ENCODE measurements at regions of chr3 and their contacts with region 1.

Region 1: GRCh38 chr3:127672516-127673190 is at the start of gene ABTB1:
- DNase-seq: peak; percentile 82
- H3K4me3 ChIP-seq: peak within 1 kb of the TSS; percentile 72 to 86
- H3K27ac ChIP-seq: peak within 1 kb of the TSS; percentile 83 to 85
- H3K4me1 ChIP-seq: no peaks in the 10 kb centered on the region
- H3K27me3 ChIP-seq: no peaks in the 10 kb centered on the region
- CTCF ChIP-seq: no peak
- POLR2A ChIP-seq: peak; percentile 74
- total RNA-seq, gene ABTB1: 33.4 to 60.2 TPM

Region 2: DNA sequence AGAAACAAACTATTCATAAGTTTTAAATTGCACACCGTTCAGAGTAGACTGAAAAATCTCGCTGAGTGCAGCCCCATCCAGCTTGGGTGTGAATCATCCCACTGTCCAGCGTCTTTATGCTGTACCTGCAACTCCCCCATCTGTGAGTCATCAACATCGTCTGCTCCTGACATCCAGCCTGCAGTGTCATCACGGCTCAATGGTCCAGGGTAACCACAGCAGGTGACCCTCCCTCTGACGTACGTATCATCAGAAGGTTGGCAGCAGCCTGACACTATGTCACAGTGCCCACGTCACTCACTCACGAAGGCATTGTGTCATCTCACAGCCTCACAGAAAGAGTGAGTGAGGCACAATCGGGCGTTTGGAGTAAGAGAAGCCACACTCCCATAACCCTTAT is 147.3 kb before region 1 on chr3:
- intact Hi-C with region 1: no loop called
- DNase-seq: no peak
- H3K4me3 ChIP-seq: no peak overlapping the region
- H3K27ac ChIP-seq: no peak overlapping the region
- H3K4me1 ChIP-seq: no peaks in the 10 kb centered on the region
- H3K27me3 ChIP-seq: peaks cover 3% of the 10 kb centered on the region
- CTCF ChIP-seq: no peak
- POLR2A ChIP-seq: no peak

Region 3: GRCh38 chr3:128051837-128052594 is 379.4 kb after region 1 on chr3 and contains the start of gene SEC61A1:
- intact Hi-C with region 1: loop called (anchors 10 kb)
- DNase-seq: peak; percentile 92
- H3K4me3 ChIP-seq: peak within 1 kb of the TSS; percentile 89 to 92
- H3K27ac ChIP-seq: peak within 1 kb of the TSS; percentile 82 to 85
- H3K4me1 ChIP-seq: peaks cover 6% of the 10 kb centered on the region
- H3K27me3 ChIP-seq: no peaks in the 10 kb centered on the region
- CTCF ChIP-seq: peak in 1 of 4 experiments; percentile 27
- POLR2A ChIP-seq: peak; percentile 61
- total RNA-seq, gene SEC61A1: 166 to 195 TPM

Measured in prostate gland (tissue), 2 donors.